HepG2 (cell line): ENCODE measurements at regions of chr17 and their contacts with region 1.

Region 1: GRCh38 chr17:19672009-19672750 is 23.6 kb downstream of the ALDH3A2 start:
- DNase-seq: peak; percentile 94
- ATAC-seq: peak; percentile 91
- H3K4me3 ChIP-seq: no peak overlapping the region
- H3K27ac ChIP-seq: peak overlapping the region; percentile 67
- H3K4me1 ChIP-seq: peaks cover 54% of the 10 kb centered on the region
- H3K27me3 ChIP-seq: no peaks in the 10 kb centered on the region
- CTCF ChIP-seq: peak; percentile 55
- EP300 ChIP-seq: peak in 1 of 2 experiments; percentile 93; a peak in 1 of 4 replicates
- POLR2A ChIP-seq: no peak
- RAD21 ChIP-seq: peak; percentile 59; the same call in 1 of the 2 replicates

Region 2: GRCh38 chr17:19513897-19514488 is 158.2 kb before region 1 on chr17:
- CTCF ChIA-PET with region 1: interaction called, 5 read pairs
- POLR2A ChIA-PET with region 1: no interaction called
- in situ Hi-C with region 1: no loop called
- intact Hi-C with region 1: loop called (anchors 1 kb)
- DNase-seq: peak; percentile 68
- ATAC-seq: peak; percentile 87
- H3K4me3 ChIP-seq: no peak overlapping the region
- H3K27ac ChIP-seq: no peak overlapping the region
- H3K4me1 ChIP-seq: peaks cover 58% of the 10 kb centered on the region
- H3K27me3 ChIP-seq: no peaks in the 10 kb centered on the region
- CTCF ChIP-seq: peak; percentile 92
- EP300 ChIP-seq: no peak
- POLR2A ChIP-seq: no peak
- RAD21 ChIP-seq: peak; percentile 90

Region 3: DNA sequence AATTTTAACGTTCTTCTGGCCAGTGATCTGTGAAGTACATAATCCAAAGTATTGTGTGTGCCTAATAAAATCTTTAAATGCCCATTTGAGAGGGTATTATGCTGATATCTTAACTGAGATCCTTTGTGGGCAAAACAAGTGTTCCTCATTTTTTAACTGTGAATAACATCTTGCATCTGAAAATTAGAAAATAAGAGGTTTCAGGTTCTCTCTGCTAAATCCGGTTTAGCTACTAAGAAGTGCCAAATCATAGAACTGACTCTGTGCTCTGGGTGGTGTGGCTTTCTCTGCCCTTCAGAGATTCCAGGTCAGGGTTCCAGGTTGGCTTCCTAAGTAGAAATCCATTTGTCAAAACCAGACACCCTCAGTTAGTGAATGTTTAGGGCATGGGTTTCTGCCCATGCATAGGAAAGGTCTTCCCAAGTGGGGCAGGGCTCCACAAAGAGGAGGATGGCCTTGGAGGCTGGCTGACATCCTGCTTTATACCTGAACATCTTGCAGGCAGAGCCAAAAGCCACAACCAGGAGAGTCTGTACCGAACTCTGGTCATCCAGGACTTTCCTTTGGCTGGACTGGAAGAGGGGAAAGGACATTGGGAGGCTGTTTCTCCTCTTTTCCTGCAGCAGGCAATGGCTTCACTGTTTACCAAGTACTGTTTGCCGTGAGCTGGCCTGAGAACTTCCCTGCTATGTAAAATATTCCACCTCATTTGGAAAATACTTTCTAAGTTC is 15.2 kb before region 1 on chr17:
- CTCF ChIA-PET with region 1: no interaction called
- POLR2A ChIA-PET with region 1: interaction called, 66 read pairs
- in situ Hi-C with region 1: no loop called
- intact Hi-C with region 1: loop called (anchors 1 kb)
- DNase-seq: peak; percentile 56
- ATAC-seq: peak; percentile 33
- H3K4me3 ChIP-seq: no peak overlapping the region
- H3K27ac ChIP-seq: peak overlapping the region; percentile 91
- H3K4me1 ChIP-seq: peaks cover 88% of the 10 kb centered on the region
- H3K27me3 ChIP-seq: no peaks in the 10 kb centered on the region
- CTCF ChIP-seq: no peak
- EP300 ChIP-seq: 0 out of 4 replicates have a peak, but pooled peaks of 1 of the 2 experiments have one; percentile 29
- POLR2A ChIP-seq: peak in 1 of 2 experiments; percentile 24; a peak in 1 of 4 replicates
- RAD21 ChIP-seq: no peak

Region 4: GRCh38 chr17:19718604-19719354 is 46.6 kb after region 1 on chr17:
- CTCF ChIA-PET with region 1: no interaction called
- POLR2A ChIA-PET with region 1: interaction called, 5 read pairs
- in situ Hi-C with region 1: no loop called
- intact Hi-C with region 1: loop called (anchors 5 kb)
- DNase-seq: peak; percentile 38
- ATAC-seq: peak; percentile 60
- H3K4me3 ChIP-seq: no peak overlapping the region; a peak in 1 of 6 replicates
- H3K27ac ChIP-seq: no peak overlapping the region
- H3K4me1 ChIP-seq: peaks cover 71% of the 10 kb centered on the region
- H3K27me3 ChIP-seq: peaks cover 0 to 4% of the 10 kb centered on the region in 2 experiments; a peak in 2 of 5 replicates
- CTCF ChIP-seq: peak; percentile 84
- EP300 ChIP-seq: no peak
- POLR2A ChIP-seq: no peak
- RAD21 ChIP-seq: peak; percentile 85

Region 5: GRCh38 chr17:19796457-19796856 is 124.3 kb after region 1 on chr17:
- CTCF ChIA-PET with region 1: no interaction called
- POLR2A ChIA-PET with region 1: no interaction called
- in situ Hi-C with region 1: no loop called
- intact Hi-C with region 1: no loop called
- DNase-seq: no peak
- ATAC-seq: no peak
- H3K4me3 ChIP-seq: no peak overlapping the region
- H3K27ac ChIP-seq: no peak overlapping the region
- H3K4me1 ChIP-seq: no peaks in the 10 kb centered on the region
- H3K27me3 ChIP-seq: no peaks in the 10 kb centered on the region
- CTCF ChIP-seq: no peak
- EP300 ChIP-seq: no peak
- POLR2A ChIP-seq: no peak
- RAD21 ChIP-seq: no peak